Activated T-helper 1 cell treated with anti-CD3 and anti-CD28 coated beads, Interleukin-12 subunit alpha, Interleukin-12 subunit beta, Interleukin-2, Interleukin-4 antibody, amounts not matched to agents 30 ng/mL and 10 ng/mL and 1 ng/mL, durations not matched to agents 14 hours and 24 hours and 36 hours (primary cell): ENCODE measurements at regions of chr3 and their contacts with region 1.

Region 1: DNA sequence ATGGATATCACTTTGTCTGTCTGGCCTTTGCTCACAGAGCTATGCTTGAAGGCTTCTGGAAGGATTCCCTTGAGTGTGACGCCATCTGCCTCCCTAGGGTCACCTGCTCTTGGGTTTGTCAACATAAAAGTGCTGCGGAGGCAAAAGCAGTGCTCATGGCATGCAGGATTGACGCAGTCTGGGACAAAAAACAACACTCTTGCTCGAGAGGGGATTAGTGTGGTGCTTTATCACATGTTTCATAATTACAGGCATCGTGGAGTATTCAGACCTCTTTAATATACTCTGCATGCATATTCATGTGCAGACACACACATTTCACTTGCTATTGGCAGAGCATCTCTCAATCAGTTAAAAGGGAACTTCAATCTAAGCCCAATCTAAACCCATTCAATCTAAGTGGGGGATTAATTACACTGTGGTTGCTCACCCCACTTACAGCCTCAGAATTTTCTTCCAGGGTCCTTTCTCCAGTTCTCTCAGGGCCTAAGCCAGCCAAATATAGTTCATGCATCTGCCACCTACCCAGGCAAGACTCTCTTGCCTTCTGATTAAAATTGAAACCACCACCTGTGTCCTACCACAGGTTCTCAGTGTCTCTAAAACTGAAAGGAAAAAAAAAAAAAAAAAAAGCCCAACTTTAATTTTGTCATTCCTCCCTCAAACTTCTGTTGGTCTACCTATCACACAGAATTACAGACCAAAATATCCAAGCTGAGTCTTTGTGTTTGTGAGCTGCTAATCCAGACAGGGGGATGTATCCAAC is 75.6 kb downstream of the BFSP2 start:
- DNase-seq: peak; percentile 42
- H3K4me3 Mint-ChIP-seq: peak overlapping the region; percentile 59
- H3K27ac Mint-ChIP-seq: peak overlapping the region; percentile 32
- H3K4me1 Mint-ChIP-seq: peaks cover 52% of the 10 kb centered on the region
- H3K27me3 Mint-ChIP-seq: no peaks in the 10 kb centered on the region

Region 2: DNA sequence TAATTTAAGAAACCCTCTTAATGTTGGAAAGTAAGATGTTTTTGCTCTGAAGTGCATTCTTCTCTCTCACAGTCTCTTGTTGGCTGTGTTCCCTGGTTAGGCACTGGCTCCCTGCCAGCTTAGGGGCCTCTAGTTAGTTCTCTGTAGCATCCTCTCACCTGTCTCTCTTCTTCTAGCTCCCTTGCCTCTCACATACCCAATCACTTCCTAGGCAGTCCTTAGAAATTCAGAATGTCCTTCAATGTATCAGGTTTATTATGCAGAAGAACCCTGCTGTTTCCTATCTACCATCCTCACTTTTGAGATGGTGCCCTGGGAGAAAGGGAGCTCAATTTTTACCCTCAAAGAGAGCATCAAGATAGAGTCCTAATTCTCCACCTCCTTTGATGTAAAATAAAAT is 1404.4 kb before region 1 on chr3:
- intact Hi-C with region 1: no loop called
- DNase-seq: no peak
- H3K4me3 Mint-ChIP-seq: no peak overlapping the region
- H3K27ac Mint-ChIP-seq: no peak overlapping the region
- H3K4me1 Mint-ChIP-seq: no peaks in the 10 kb centered on the region
- H3K27me3 Mint-ChIP-seq: no peaks in the 10 kb centered on the region

Region 3: GRCh38 chr3:132205609-132206008 is 1269.8 kb before region 1 on chr3:
- intact Hi-C with region 1: no loop called
- DNase-seq: no peak
- H3K4me3 Mint-ChIP-seq: no peak overlapping the region
- H3K27ac Mint-ChIP-seq: no peak overlapping the region
- H3K4me1 Mint-ChIP-seq: no peaks in the 10 kb centered on the region
- H3K27me3 Mint-ChIP-seq: peaks cover 2% of the 10 kb centered on the region

Region 4: GRCh38 chr3:133448478-133449122 is 26.8 kb before region 1 on chr3:
- intact Hi-C with region 1: loop called (anchors 1 kb)
- DNase-seq: peak; percentile 22
- H3K4me3 Mint-ChIP-seq: peak overlapping the region; percentile 34
- H3K27ac Mint-ChIP-seq: peak overlapping the region; percentile 80
- H3K4me1 Mint-ChIP-seq: peaks cover 34% of the 10 kb centered on the region
- H3K27me3 Mint-ChIP-seq: peaks cover 2% of the 10 kb centered on the region

Region 5: GRCh38 chr3:133464573-133464972 is 10.9 kb before region 1 on chr3:
- intact Hi-C with region 1: loop called (anchors 1 kb)
- DNase-seq: no peak
- H3K4me3 Mint-ChIP-seq: no peak overlapping the region
- H3K27ac Mint-ChIP-seq: no peak overlapping the region
- H3K4me1 Mint-ChIP-seq: peaks cover 50% of the 10 kb centered on the region
- H3K27me3 Mint-ChIP-seq: peaks cover 4% of the 10 kb centered on the region